Posterior vena cava (tissue), 2 donors: ENCODE measurements at regions of chr16 and their contacts with region 1.

Region 1: DNA sequence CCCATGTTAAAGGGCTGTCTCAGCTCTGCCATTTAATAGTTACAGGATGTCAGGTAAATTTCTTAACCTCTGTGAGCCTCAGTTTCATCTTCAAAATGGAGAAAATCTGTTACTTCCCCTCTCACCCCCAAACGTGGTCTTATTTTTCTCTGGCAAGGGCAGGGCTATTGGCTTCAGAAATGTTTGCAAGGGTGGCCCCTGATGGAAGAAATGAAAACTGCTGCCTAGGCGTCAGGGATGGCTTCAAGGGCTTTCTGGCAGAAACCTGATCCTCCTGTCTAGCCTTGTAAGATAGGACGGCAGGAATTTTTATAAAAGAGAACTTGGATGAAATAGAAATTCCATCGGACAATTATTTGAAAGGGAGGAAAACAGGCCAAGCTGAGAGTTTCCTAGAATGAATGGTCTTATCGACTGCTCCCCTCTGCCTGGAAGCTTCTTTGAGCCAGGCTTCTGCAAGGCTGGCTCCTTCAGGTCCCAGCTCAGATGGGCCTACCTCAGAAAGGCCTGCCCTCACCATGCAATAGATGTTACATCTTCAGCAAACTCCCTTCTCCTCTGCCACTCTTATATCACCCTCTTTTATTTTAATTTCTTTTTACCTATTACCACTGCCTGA is 43.0 kb upstream of the TANGO6 start:
- DNase-seq: no peak

Region 2: DNA sequence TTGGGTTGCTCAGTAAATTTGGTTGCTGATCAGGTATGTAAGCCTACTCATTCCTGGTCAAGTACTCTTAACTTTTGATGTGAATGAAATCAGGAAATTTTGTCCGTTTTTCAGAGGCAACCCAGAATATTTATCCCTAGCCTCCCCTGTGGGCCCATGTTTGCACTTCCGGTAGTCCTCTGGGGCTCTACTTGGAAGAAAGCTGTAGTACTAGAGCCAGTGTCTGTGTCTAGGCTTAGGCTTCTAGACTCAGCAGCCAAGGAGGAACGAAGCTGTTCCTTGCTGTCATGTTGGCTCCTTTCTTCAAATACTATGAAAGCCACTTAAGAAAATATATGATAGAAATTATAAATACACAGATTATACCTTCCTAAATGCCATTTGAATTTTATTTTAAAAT is 585.6 kb before region 1 on chr16:
- intact Hi-C with region 1: loop called in 1 of 2 experiments (anchors 10 kb)
- DNase-seq: no peak